AG04449 (cell line): ENCODE measurements at regions of chr15 and their contacts with region 1.

Region 1: GRCh38 chr15:30872341-30872748 is 31.4 kb upstream of the FAN1 start:
- DNase-seq: no peak
- H3K4me3 ChIP-seq: no peak overlapping the region
- CTCF ChIP-seq: no peak

Region 2: DNA sequence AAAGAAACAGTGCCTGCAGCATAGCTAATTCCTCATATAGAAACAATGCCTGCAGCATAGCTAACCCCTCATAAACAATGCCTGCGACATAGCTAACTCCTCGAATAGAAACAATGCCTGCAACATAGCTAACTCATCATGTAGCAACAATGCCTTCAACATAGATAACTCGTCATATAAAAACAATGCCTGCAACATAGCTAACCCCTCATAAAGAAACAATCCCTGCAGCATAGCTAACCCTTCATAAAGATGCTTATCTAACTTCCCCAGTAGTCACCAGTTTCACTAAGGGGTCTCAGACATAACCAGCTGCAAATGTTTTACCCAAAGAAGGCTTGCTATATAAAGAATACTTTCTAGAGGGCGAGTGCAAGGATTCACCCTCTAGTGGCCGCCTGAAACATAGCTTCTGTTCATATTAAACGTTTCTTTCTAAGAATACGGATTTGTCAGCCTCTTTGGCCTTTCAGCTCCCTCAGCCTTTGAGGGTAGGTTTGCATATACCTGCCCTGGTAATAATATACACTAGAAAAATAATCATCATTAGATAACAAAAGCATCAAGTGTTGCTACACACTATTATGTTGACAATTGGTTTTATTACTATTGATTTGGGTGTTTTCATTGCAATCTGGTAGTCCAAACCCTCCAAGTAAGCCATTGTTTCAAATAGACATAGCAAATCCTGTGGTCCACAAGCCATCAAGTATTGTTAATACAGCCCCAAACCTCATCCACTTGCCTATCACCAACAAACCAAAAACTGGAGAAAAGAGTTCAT is 13.1 kb before region 1 on chr15:
- CTCF ChIA-PET with region 1: interaction called, 18 read pairs
- POLR2A ChIA-PET with region 1: no interaction called
- DNase-seq: peak; percentile 17
- H3K4me3 ChIP-seq: no peak overlapping the region
- CTCF ChIP-seq: peak; percentile 61

Region 3: DNA sequence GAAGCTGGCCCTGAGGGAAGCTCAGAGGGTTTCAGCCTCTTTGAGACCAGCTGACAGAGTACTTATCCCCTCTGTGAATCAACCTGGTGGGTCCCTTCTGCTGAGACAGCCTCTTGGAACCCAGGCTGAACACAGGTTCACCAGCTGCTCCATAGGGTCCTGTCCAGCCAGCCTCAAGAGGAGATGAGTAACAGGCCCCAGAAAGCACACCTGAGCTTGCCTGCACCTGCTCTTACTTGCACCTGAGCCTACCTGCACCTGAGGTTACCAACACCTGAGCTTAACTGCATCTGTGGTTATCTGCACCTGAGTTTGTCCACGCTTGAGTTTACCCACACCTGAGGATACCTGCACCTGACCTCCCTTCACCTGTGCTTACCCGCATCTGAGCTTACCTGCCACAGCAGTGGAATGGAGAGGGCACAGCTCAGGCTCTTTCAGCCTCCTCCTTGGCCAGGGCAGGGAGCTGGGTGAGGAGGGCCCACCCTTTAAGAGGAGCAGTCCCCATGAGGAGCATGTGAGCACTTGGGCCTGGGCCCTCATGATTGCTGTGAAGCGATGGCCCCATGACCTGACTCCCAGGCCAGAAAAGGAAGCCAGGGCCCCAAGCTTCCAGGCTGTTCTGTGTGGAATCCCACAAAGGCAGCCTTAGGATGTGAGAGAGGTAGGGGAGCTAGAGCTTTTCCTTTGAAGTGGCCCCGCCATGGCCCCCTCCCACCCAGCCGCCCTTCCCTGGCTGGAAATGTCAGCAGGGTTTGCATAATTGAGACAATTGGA is 229.1 kb after region 1 on chr15 and contains the start of gene TRPM1:
- CTCF ChIA-PET with region 1: no interaction called
- POLR2A ChIA-PET with region 1: no interaction called
- DNase-seq: no peak
- H3K4me3 ChIP-seq: no peak within 1 kb of the TSS
- CTCF ChIP-seq: no peak